ENCODE measurements at regions of chr20 and their contacts with region 1.

Region 1: DNA sequence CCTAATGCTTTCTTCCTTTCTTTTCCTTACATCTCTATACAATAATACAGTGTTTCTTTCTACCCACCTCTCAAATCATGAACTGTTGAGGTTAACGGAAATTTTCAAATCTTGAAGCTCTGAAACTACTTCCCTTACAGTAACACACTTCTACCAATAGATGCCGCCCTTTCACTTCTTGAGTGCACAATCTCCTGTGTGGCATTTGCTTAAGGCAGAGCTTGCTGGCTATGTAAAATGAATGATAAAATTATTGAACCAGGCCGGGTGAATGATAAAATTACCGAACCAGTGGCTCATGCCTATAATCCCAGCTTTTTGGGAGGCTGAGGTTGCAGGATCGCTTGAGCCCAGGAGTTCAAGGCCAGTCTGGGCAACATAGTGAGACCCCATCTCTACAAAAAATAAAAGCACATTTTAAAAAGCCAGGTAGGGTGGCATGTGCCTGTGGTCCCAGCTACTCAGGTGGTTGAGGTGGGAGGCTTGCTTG is 56.8 kb downstream of the KCNS1 start:
- DNase-seq: peak; percentile 52
- ATAC-seq: peak; percentile 86
- H3K4me3 Mint-ChIP-seq: no peak overlapping the region
- H3K27ac Mint-ChIP-seq: peak overlapping the region; percentile 93
- H3K4me1 Mint-ChIP-seq: peaks cover 76% of the 10 kb centered on the region
- H3K27me3 Mint-ChIP-seq: no peaks in the 10 kb centered on the region

Region 2: GRCh38 chr20:44471481-44471882 is 572.6 kb before region 1 on chr20:
- CTCF ChIA-PET with region 1: no interaction called
- POLR2A ChIA-PET with region 1: no interaction called
- intact Hi-C with region 1: no loop called
- DNase-seq: no peak
- ATAC-seq: no peak
- H3K4me3 Mint-ChIP-seq: no peak overlapping the region
- H3K27ac Mint-ChIP-seq: no peak overlapping the region
- H3K4me1 Mint-ChIP-seq: peaks cover 10% of the 10 kb centered on the region
- H3K27me3 Mint-ChIP-seq: no peaks in the 10 kb centered on the region

Region 3: GRCh38 chr20:44770484-44771170 is 273.5 kb before region 1 on chr20:
- CTCF ChIA-PET with region 1: no interaction called
- POLR2A ChIA-PET with region 1: no interaction called
- intact Hi-C with region 1: no loop called
- DNase-seq: no peak
- ATAC-seq: no peak
- H3K4me3 Mint-ChIP-seq: no peak overlapping the region
- H3K27ac Mint-ChIP-seq: no peak overlapping the region
- H3K4me1 Mint-ChIP-seq: no peaks in the 10 kb centered on the region
- H3K27me3 Mint-ChIP-seq: peaks cover 5% of the 10 kb centered on the region

Region 4: GRCh38 chr20:45028424-45029136 is 15.5 kb before region 1 on chr20:
- CTCF ChIA-PET with region 1: interaction called, 34 read pairs
- POLR2A ChIA-PET with region 1: no interaction called
- intact Hi-C with region 1: no loop called
- DNase-seq: peak; percentile 23
- ATAC-seq: peak; percentile 44
- H3K4me3 Mint-ChIP-seq: no peak overlapping the region
- H3K27ac Mint-ChIP-seq: peak overlapping the region; percentile 86
- H3K4me1 Mint-ChIP-seq: peaks cover 75% of the 10 kb centered on the region
- H3K27me3 Mint-ChIP-seq: no peaks in the 10 kb centered on the region

Region 5: DNA sequence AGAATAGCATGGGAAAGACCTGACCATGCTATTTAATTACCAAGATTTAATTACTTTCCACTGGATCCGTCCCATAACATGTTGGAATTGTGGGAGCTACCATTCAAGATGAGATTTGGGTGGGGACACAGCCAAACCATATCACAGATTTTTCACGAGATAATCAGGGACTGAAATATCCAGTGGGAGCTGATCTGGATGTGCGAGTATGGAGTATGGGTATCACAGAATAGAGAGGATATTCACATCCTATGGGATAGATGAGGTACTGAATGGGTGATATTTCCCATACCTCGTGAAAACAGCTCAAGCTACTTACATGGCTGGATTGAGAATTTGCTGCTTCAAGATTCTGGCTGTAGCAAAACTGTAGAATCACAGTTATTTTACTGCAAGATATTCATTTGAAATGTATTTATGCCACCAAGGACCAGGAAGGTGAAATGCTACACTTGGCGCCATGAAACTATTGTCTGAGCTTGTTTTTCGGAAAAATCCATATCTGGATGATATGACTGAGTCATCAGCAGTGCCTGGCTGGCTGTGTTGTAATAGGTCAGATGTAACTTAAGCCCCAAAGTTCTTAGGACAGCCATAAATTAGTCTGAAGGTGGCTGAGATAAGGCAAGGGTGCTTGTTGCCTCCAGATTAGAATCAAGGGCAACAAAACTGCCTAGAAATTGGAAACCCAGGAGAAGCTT is 27.0 kb after region 1 on chr20:
- CTCF ChIA-PET with region 1: interaction called, 18 read pairs
- POLR2A ChIA-PET with region 1: interaction called, 5 read pairs
- intact Hi-C with region 1: no loop called
- DNase-seq: no peak
- ATAC-seq: no peak
- H3K4me3 Mint-ChIP-seq: no peak overlapping the region
- H3K27ac Mint-ChIP-seq: peak overlapping the region; percentile 66
- H3K4me1 Mint-ChIP-seq: peaks cover 48% of the 10 kb centered on the region
- H3K27me3 Mint-ChIP-seq: no peaks in the 10 kb centered on the region

Region 6: GRCh38 chr20:45111799-45112471 is 67.8 kb after region 1 on chr20:
- CTCF ChIA-PET with region 1: interaction called, 25 read pairs
- POLR2A ChIA-PET with region 1: no interaction called
- intact Hi-C with region 1: loop called in 1 of 2 experiments (anchors 1 kb)
- DNase-seq: peak; percentile 59
- ATAC-seq: peak; percentile 59
- H3K4me3 Mint-ChIP-seq: no peak overlapping the region
- H3K27ac Mint-ChIP-seq: no peak overlapping the region
- H3K4me1 Mint-ChIP-seq: peaks cover 4% of the 10 kb centered on the region
- H3K27me3 Mint-ChIP-seq: peaks cover 1% of the 10 kb centered on the region

Region 7: GRCh38 chr20:45229264-45230056 is 185.3 kb after region 1 on chr20:
- CTCF ChIA-PET with region 1: interaction called, 5 read pairs
- POLR2A ChIA-PET with region 1: no interaction called
- intact Hi-C with region 1: loop called in 1 of 2 experiments (anchors 1 kb)
- DNase-seq: peak; percentile 82
- ATAC-seq: peak; percentile 71
- H3K4me3 Mint-ChIP-seq: no peak overlapping the region
- H3K27ac Mint-ChIP-seq: no peak overlapping the region
- H3K4me1 Mint-ChIP-seq: peaks cover 2% of the 10 kb centered on the region
- H3K27me3 Mint-ChIP-seq: peaks cover 37% of the 10 kb centered on the region